ENCODE measurements at regions of chr9 and their contacts with region 1.

Region 1: GRCh38 chr9:86801246-86801645 is 146.1 kb downstream of the GAS1 start:
- DNase-seq: no peak
- ATAC-seq: no peak
- H3K4me3 ChIP-seq: no peak overlapping the region
- H3K27ac ChIP-seq: no peak overlapping the region
- H3K4me1 ChIP-seq: no peaks in the 10 kb centered on the region
- H3K27me3 ChIP-seq: peaks cover 27% of the 10 kb centered on the region
- CTCF ChIP-seq: no peak
- POLR2A ChIP-seq: no peak
- RAD21 ChIP-seq: no peak

Region 2: DNA sequence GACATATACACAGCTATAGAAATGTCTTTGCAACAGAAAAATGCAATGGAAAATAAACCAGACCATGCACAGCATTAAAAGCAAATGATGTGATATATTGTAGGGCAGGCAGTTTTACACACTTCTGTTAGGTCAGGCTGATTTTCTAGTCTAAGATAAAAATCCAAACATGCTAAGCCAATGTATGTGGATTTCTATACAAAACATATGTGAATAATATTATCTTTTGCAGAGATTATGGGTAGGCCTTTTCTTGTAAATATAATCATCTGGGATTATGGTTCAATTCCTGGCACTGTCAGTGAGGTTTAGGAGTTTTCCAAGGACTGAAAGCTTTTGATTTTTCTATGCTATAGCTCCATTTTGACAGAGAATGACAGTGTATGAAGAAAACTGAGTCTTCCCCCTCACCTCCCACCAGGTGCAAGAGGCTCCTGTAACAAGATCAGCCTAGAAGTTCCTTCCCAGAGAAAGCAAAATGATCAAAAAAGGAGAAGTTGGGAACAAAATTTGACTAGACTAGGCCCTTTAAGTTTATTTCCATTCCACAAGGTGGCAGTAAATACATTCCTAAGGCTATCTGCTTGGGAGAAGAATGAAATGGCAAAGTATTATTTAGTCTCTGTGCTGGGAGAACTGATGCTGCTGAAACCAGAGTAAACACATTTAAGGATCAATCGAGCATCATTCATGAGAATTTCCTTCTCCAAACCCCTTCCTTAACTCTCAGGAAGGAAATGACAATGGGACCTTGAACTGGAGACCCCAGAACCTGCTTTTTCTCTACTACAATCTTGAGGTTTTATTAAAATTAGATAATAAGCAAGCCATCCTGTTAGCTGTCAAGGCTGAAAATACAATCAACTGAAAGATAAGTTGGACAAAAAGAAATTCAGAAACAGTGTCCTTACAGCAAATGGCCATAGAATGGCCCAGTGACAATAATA is 314.1 kb before region 1 on chr9:
- CTCF ChIA-PET with region 1: no interaction called
- POLR2A ChIA-PET with region 1: no interaction called
- RAD21 ChIA-PET with region 1: no interaction called
- intact Hi-C with region 1: loop called (anchors 5 kb)
- DNase-seq: peak; percentile 31
- ATAC-seq: peak; percentile 68; the same call in 1 of the 2 replicates
- H3K4me3 ChIP-seq: no peak overlapping the region
- H3K27ac ChIP-seq: no peak overlapping the region
- H3K4me1 ChIP-seq: no peaks in the 10 kb centered on the region
- H3K27me3 ChIP-seq: peaks cover 23% of the 10 kb centered on the region
- CTCF ChIP-seq: peak; percentile 40 to 62 (median 46); a peak in 4 of 6 replicates
- POLR2A ChIP-seq: no peak
- RAD21 ChIP-seq: peak; percentile 73

Region 3: DNA sequence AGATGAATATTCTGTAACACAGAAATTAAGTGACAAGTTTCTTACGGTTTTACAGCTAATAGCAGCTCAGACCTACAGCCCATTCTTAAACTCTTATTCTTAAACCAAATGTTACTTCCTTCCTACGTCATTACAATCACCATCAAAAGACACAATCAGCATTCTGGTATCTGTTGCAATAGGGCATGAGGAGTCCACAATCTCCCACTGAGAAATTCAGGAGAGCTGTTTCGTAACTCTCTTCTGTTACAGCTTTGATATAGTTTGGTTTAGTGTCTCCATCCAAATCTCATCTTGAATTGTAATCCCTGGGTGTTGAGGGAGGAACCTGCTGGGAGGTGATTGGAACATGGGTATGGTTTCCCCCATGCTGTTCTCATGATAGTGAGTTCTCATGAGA is 17.4 kb before region 1 on chr9:
- CTCF ChIA-PET with region 1: no interaction called
- POLR2A ChIA-PET with region 1: no interaction called
- RAD21 ChIA-PET with region 1: no interaction called
- intact Hi-C with region 1: no loop called
- DNase-seq: no peak
- ATAC-seq: no peak
- H3K4me3 ChIP-seq: no peak overlapping the region
- H3K27ac ChIP-seq: no peak overlapping the region
- H3K4me1 ChIP-seq: no peaks in the 10 kb centered on the region
- H3K27me3 ChIP-seq: peaks cover 36% of the 10 kb centered on the region
- CTCF ChIP-seq: no peak
- POLR2A ChIP-seq: no peak
- RAD21 ChIP-seq: no peak

Region 4: DNA sequence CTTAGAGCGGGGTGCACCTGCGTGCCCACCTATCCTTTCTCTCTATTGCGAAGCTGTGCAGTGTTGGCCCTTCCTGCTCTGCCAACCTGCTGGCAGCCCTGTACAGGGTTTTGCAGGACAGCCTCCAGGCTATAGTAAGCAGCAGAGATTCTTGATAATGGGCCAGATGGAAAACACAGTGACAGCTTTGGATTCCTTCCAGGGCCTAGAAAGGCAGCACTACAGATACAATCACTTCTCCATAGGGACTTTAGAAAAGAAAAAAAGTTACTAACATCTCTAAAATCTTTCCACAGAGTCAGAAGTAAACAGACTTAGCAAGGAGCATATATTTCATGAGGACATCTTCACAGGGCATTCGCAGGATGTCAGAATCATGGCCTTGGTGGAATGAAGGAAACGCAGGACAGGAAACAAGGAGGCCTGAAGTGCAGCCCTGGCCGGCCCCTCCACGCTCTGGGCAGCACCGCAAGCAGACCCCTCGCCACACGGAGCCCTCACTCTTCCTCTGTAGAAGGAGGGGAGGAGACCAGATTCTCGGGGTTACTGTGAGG is 318.2 kb after region 1 on chr9:
- CTCF ChIA-PET with region 1: no interaction called
- POLR2A ChIA-PET with region 1: no interaction called
- RAD21 ChIA-PET with region 1: no interaction called
- intact Hi-C with region 1: no loop called
- DNase-seq: no peak
- ATAC-seq: no peak
- H3K4me3 ChIP-seq: no peak overlapping the region
- H3K27ac ChIP-seq: no peak overlapping the region
- H3K4me1 ChIP-seq: no peaks in the 10 kb centered on the region
- H3K27me3 ChIP-seq: peaks cover 37% of the 10 kb centered on the region
- CTCF ChIP-seq: no peak
- POLR2A ChIP-seq: no peak
- RAD21 ChIP-seq: no peak